ENCODE measurements at regions of chr1 and their contacts with region 1.

Region 1: DNA sequence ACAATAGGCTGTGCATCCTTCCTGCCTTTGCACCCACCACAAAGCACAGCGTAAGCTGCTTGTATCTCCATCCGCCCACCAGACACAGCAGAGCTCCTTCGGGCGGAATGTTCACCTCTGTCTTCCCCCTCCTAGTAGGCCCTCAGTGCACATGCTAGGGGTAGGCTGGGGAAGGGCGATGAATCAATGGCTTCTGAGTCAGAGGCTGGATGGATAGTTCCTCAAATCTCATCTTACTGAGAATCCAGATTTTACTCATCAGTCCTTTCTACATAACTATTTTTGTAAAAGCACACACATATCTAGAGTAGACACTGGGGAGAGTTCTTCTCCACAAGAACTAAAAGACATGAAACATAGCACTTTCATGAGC is 73.8 kb downstream of the BCAR3 start:
- DNase-seq: no peak
- H3K4me3 Mint-ChIP-seq: no peak overlapping the region
- H3K27ac Mint-ChIP-seq: peak overlapping the region; percentile 85
- H3K4me1 Mint-ChIP-seq: peaks cover 57% of the 10 kb centered on the region
- H3K27me3 Mint-ChIP-seq: no peaks in the 10 kb centered on the region
- CTCF ChIP-seq: no peak

Region 2: DNA sequence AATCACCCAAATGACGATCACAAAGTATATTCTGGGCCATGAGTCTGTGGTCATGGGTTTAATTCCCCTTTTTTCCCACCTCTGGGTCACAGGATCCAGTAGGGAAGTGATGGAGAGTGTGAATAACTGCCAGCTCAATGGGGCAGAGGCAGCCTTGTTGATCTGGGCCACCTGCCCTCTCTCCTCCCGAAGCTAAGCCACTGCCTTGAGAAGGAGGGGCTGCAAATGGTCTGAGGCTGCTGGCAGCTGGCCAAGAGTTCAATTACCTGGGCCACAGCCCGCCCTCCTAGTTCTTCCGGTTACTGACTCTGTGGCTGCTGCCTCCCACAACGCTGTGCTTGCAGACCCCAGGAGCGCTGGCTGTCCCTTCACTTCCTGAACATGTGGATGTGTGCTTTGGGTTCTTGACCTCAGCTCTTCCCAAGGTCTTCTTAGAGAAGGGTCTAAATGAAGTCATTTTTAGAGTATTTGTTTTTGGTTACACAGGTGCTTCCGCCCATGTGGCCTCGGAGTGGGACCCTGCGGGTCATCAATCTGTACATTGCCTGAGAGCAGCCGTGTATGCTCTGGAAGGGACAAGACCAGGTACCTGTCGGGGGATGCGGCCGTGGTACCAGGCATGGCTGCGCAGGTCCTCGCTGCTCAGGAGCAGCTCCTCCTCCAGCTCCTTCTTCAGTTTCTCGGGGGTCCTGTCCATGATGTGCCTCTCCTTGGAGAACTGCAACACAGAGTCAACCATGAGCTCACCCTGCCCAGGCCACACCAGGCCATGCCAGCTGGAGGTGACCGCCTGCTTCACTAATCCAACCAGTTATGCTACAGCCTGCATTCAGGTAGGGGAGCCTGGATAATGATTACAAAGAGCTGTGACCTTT is 15.9 kb before region 1 on chr1:
- CTCF ChIA-PET with region 1: interaction called, 4 read pairs
- POLR2A ChIA-PET with region 1: interaction called, 36 read pairs
- intact Hi-C with region 1: no loop called
- DNase-seq: peak; percentile 46
- H3K4me3 Mint-ChIP-seq: no peak overlapping the region
- H3K27ac Mint-ChIP-seq: peak overlapping the region; percentile 49
- H3K4me1 Mint-ChIP-seq: peaks cover 59% of the 10 kb centered on the region
- H3K27me3 Mint-ChIP-seq: no peaks in the 10 kb centered on the region
- CTCF ChIP-seq: no peak